ENCODE measurements at regions of chr6 and their contacts with region 1.

Region 1: GRCh38 chr6:45419571-45420082 is 41.9 kb upstream of the SUPT3H start:
- DNase-seq: peak; percentile 52
- ATAC-seq: peak; percentile 21 to 25

Region 2: DNA sequence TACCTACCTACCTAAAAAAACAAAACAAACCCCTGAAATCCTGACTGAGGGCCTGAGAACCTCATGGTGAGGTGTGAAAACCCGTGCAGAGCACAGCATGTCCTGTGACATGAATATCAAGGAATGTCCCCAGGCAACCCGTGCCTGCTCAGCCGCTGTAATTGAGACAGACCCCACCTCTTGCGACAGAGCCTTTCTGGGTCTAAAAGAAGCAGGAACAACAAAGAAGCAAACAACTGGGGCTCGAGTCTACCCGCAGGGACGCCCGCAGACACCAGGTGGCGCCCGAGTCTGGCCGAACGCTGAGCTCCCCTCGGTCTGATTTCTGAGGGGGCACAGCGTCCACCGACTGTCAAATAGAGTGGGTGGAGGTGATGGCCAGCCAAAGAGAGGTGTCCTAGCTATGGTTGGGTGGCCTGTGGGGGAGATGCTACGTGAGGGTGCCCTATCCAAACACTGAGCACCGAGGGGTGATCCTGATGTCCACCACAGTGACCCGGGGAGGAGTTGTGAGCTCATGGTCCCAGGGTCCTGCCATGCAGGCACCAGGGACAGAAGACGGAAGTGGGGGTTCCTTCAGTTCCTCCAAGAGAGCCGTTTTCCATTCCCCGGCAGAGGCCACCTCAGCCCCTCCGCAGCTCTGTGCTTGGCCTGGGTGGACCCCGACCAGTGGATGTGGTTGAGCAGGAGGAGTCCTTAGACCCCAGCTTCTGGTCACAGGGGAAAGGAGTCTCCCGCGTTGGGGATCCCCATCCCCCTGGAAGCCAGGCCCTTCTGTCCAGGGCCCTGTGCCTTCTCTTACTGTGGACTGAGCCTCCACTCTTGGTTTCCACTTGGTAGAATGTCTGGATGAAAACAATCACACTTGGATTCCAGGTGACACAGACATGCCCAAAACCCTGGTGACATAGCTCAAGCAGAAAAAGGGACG is 764.0 kb before region 1 on chr6:
- intact Hi-C with region 1: loop called (anchors 10 kb)
- DNase-seq: peak; percentile 77
- ATAC-seq: peak; percentile 76 to 82

Region 3: DNA sequence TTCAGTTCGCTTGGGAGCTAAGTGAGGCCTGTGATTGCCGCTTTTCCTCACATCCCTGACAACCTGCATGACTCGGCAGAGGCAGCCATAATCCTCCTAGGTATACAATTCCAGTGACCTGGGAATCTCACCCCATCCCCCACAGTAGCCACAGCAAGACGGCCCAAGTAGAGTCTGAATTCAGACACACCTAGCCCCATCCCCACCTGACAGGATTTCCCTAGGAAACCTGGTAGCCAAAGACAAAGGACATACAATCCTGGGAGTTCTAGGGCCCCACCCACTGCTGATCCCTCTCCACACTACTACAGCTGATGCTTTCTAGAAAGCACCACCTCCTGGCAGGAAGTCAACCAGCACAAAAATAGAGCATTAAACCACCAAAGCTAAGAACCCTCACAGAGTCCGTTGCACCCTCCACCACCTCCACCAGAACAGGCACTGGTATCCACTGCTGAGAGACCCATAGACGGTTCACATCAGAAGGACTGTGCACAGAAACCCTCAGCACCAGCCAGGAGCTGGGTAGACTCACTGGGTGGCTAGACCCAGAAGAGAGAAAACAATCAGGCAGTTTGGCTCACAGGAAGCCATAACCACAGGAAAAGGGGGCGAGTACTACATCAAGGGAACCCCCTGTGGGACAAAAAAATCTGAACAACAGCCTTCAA is 109.4 kb before region 1 on chr6:
- intact Hi-C with region 1: no loop called
- DNase-seq: no peak
- ATAC-seq: no peak

Region 4: GRCh38 chr6:45626087-45626891 is 206.7 kb after region 1 on chr6:
- intact Hi-C with region 1: no loop called
- DNase-seq: no peak
- ATAC-seq: no peak

Region 5: DNA sequence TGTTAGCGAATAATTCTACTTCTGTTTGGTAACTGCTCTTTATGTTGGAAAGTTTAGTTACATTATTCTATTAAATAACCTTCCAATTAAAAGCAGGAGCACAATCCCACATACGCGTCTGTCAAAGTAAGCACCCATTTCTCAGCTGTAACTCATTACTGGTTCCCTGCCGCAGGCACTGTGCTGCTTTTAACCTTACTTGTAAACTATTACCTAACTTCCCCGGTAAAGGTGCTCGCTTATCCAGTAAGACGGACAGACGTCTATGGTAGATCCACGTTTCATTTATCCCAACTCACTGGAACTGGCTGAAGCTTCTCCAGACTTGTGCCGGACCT is 709.6 kb after region 1 on chr6:
- intact Hi-C with region 1: no loop called
- DNase-seq: no peak
- ATAC-seq: peak; percentile 5 to 34

Measured in left cardiac atrium (tissue), 4 donors.